Activated CD8-positive, alpha-beta T cell treated with anti-CD3 and anti-CD28 coated beads for 36 hours (primary cell): ENCODE measurements at regions of chr2 and their contacts with region 1.

Region 1: GRCh38 chr2:113791697-113792590 is 35.5 kb upstream of the SLC35F5 start:
- DNase-seq: no peak
- ATAC-seq: peak; percentile 89
- H3K4me3 Mint-ChIP-seq: peak overlapping the region; percentile 5
- H3K27ac Mint-ChIP-seq: peak overlapping the region; percentile 88
- H3K4me1 Mint-ChIP-seq: peaks cover 15% of the 10 kb centered on the region
- H3K27me3 Mint-ChIP-seq: peaks cover 5% of the 10 kb centered on the region
- CTCF ChIP-seq: no peak

Region 2: GRCh38 chr2:113831161-113831560 is 39.2 kb after region 1 on chr2:
- CTCF ChIA-PET with region 1: no interaction called
- POLR2A ChIA-PET with region 1: no interaction called
- intact Hi-C with region 1: no loop called
- DNase-seq: no peak
- ATAC-seq: no peak
- H3K4me3 Mint-ChIP-seq: no peak overlapping the region
- H3K27ac Mint-ChIP-seq: no peak overlapping the region
- H3K4me1 Mint-ChIP-seq: no peaks in the 10 kb centered on the region
- H3K27me3 Mint-ChIP-seq: no peaks in the 10 kb centered on the region
- CTCF ChIP-seq: no peak

Region 3: DNA sequence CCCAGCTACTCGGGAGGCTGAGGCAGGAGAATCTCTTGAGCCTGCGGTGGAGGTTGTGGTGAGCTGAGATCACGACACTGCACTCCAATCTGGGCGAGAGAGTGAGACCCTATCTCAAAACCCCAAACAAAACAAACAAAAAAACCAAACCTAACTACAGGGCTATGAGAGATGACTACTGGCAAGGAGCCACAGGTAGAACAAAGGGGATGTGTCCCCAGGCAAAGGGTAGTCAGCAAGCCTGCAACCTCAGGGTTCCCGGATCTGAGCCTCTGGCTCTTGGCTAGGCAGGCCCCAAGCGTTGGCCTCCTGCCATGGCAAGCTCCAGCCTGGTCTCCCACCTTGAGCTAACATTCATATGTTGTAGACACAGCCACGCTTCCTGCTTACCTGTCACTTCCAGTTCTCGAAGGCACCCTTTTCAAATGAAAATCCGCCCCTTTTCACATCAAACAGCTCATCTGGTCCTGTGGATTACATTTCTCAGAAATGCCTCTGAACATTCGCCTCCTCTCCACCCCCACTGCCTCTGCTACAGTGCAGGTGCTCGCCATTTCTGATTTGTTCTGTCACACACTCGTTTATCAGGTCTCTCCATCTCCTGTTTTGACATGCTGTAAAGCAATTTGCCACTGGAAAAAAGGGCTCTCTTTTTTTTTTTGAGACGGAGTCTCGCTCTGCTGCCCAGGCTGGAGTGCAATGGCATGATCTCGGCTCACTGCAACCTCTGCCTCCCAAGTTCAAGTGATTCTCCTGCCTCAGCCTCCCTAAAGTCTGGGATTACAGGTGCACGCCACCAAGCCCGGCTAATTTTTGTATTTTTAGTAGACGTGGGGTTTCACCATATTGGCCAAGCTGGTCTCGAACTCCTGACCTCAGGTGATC is 84.8 kb after region 1 on chr2:
- CTCF ChIA-PET with region 1: interaction called, 4 read pairs
- POLR2A ChIA-PET with region 1: no interaction called
- intact Hi-C with region 1: loop called (anchors 10 kb)
- DNase-seq: peak; percentile 88
- ATAC-seq: peak; percentile 94
- H3K4me3 Mint-ChIP-seq: peak overlapping the region; percentile 33
- H3K27ac Mint-ChIP-seq: peak overlapping the region; percentile 87
- H3K4me1 Mint-ChIP-seq: peaks cover 38% of the 10 kb centered on the region
- H3K27me3 Mint-ChIP-seq: no peaks in the 10 kb centered on the region
- CTCF ChIP-seq: no peak